Breast epithelium (tissue), 4 donors: ENCODE measurements at regions of chr22 and their contacts with region 1.

Region 1: DNA sequence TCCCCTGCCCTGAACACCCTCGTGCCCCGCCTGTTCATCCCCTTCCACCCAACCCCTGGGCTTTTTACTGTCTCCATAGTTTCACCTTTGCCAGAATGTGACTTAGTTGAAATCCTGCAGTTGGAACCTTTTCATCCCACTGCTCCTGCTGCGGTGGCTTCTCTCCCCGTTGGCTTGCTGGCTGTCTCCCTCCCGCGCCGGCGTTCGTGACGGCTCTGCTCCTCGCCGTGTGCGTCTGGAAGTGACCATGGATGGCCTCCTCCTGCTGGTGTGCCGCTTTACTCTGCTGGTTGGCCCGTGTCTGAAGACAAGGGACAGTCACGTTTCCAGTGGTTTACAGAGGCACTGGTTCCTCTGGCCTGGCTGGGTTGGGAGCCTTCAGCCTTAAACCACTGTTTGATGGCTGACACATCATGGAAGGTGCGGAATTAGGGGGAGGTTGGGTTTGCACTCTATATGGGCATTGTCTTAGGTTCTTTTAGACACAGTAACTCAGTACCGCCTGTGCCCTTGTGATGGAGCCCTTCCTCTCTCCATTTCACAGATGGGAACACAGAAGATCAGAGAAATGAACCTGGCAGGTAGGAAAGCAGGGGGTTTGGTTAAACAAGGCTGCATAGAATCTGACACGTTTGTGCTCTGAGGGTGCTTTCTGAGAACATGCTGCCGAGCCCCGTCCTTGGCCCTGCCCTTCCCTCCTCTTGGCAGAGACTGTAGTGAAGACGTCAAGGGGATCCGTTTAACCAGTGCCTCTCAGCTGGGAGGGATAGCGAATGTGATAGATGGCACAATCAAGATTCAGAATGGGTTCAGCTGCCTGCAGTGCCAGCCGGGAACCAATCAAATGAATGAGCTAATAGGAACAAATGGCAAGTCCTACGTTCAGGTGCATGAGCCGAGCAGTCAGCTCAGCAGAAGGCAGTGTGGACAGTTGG is 228.4 kb downstream of the TBC1D22A start:
- DNase-seq: no peak
- H3K4me3 ChIP-seq: no peak overlapping the region
- H3K27ac ChIP-seq: no peak overlapping the region
- H3K4me1 ChIP-seq: no peaks in the 10 kb centered on the region
- H3K27me3 ChIP-seq: no peaks in the 10 kb centered on the region
- CTCF ChIP-seq: no peak
- POLR2A ChIP-seq: no peak

Region 2: DNA sequence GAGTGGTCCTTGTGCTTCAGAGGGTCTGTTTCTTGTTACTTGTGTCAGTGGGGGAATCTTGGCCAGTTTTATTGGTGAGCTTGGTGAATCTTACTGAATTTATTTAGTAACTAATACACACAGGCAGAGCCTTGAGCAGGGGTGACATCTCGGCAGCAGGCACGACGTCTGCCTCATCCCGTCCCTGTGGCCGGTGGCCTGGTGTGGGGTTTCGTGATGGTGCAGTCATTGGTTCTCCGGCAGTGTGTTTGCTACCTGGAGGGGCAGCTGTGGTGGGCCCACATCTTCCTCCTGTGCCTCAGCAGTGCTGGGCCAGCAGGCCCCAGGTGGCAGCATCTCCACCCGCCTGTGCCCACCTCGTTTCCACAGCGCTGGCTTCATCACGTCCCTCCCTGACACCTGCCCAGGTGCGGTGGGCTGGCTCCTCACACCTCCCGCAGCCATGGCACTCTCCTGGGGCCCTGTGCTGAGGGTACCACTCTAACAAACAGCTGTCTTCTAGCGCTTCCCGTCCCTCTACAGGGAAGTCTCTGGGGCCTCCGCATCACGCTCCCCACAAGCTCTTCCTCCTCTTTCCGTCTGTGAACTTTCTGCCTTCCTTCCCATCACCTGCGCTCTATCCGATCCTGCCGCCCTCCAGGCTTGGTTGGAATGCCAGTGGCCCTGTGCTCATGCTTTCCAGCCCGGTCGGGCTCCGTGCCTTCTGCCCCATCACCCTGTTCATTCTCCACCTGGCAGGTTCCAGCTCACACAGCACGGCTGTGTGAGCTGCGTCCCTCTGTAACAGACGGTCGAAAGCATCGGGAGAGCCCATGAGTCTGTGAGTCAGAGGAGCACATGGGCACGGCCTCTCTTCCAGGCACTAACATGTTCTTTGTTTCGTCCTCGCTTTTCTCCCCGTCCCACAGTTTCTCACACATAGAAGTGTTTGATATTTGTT is 25.1 kb before region 1 on chr22:
- intact Hi-C with region 1: loop called (anchors 1 kb)
- DNase-seq: no peak
- H3K4me3 ChIP-seq: no peak overlapping the region
- H3K27ac ChIP-seq: peak overlapping the region in 1 of 2 donors; percentile 1
- H3K4me1 ChIP-seq: no peaks in the 10 kb centered on the region
- H3K27me3 ChIP-seq: no peaks in the 10 kb centered on the region
- CTCF ChIP-seq: no peak
- POLR2A ChIP-seq: no peak

Region 3: GRCh38 chr22:47019012-47019790 is 28.3 kb after region 1 on chr22:
- intact Hi-C with region 1: loop called (anchors 1 kb)
- DNase-seq: no peak
- H3K4me3 ChIP-seq: no peak overlapping the region
- H3K27ac ChIP-seq: no peak overlapping the region
- H3K4me1 ChIP-seq: no peaks in the 10 kb centered on the region
- H3K27me3 ChIP-seq: no peaks in the 10 kb centered on the region
- CTCF ChIP-seq: no peak
- POLR2A ChIP-seq: no peak

Region 4: DNA sequence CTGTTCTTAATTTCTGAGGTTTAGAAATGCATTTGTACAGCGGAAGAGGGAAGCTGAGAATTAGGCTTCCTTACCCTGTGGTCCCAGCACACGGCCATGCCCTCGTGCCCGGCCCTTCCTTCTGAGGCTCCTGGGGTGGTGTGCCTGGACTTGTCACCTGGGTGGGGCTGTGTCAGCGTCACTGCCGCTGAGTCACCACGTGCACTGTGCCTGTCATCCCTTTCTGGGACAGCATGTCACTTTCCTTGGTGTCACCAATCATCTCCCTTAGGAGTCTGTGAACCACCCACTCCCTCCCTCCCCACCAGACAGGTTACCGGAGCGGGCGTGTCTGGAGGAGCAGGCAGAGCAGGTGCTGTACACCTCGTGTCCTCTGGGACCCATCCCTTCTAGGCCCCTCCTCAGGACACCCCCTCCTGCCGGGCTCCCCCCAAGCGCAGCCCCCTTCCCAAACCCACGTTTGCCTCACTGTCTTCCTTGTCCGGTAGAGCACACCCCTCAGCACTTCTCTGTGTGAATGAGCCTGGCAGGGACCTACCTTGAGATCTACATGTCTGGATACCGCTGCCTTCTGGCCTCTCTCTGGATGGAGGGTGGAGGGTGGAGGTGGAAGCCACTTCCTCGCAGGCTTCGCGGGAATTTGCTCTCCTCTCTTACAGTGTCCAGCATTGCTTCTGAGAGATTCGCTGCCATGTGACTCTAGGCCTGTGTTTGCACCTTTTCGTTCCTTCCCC is 139.2 kb after region 1 on chr22:
- intact Hi-C with region 1: no loop called
- DNase-seq: no peak
- H3K4me3 ChIP-seq: no peak overlapping the region
- H3K27ac ChIP-seq: no peak overlapping the region
- H3K4me1 ChIP-seq: no peaks in the 10 kb centered on the region
- H3K27me3 ChIP-seq: no peaks in the 10 kb centered on the region
- CTCF ChIP-seq: no peak
- POLR2A ChIP-seq: no peak

Region 5: DNA sequence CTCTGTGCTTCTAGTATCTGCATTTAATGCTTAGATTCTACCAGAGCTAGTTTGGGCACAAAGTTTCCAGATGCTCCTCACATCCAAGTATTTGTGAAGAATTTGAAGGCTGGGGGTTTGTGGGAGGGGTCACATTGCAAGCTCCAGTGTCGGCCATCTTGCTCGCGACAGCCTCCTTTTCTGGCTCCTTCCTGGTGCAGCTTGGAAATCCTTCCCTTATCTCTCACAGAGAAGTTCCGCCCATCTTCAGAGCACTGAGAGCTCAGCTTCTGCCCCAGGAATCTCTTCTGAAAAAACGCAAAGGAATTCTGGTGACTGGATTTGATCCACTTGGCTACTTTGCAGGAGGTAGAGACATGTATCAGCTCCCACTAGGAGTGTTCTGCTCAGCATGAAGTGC is 269.1 kb after region 1 on chr22:
- intact Hi-C with region 1: no loop called
- DNase-seq: no peak
- H3K4me3 ChIP-seq: no peak overlapping the region
- H3K27ac ChIP-seq: no peak overlapping the region
- H3K4me1 ChIP-seq: no peaks in the 10 kb centered on the region
- H3K27me3 ChIP-seq: peaks cover 0 to 4% of the 10 kb centered on the region in 2 donors
- CTCF ChIP-seq: no peak
- POLR2A ChIP-seq: no peak